ENCODE measurements at regions of chr2 and their contacts with region 1.

Region 1: DNA sequence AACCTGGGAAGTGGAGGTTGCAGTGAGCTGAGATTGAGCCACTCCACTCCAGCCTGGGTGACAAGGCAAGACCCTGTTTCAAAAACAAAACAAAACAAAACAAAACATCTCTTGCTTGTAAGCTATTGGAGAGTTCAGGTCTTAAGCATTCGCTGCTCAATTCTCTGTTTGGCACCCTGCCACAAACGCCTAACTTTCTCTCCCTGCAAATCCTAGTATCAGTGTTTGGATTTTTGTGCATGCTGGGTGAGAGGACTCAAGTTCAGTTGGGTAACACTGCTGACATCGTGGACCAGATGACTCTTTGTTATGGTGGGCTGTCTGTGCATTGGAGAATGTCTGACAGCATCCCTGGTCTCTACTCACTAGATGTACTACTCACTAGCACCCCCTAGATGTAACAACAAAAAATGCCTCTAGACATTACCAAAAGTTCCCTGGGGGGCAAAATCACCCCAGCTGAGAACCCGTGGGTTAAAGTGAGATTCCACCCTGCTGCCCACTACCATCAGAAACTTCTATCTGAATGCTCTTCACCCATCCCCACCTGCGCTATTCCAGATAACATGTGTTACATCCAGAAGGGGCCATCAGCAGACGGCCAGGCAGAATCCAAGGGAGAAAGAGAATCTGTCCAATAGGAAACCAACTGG is 50.9 kb downstream of the CACNB4 start:
- DNase-seq: no peak
- ATAC-seq: no peak

Region 2: DNA sequence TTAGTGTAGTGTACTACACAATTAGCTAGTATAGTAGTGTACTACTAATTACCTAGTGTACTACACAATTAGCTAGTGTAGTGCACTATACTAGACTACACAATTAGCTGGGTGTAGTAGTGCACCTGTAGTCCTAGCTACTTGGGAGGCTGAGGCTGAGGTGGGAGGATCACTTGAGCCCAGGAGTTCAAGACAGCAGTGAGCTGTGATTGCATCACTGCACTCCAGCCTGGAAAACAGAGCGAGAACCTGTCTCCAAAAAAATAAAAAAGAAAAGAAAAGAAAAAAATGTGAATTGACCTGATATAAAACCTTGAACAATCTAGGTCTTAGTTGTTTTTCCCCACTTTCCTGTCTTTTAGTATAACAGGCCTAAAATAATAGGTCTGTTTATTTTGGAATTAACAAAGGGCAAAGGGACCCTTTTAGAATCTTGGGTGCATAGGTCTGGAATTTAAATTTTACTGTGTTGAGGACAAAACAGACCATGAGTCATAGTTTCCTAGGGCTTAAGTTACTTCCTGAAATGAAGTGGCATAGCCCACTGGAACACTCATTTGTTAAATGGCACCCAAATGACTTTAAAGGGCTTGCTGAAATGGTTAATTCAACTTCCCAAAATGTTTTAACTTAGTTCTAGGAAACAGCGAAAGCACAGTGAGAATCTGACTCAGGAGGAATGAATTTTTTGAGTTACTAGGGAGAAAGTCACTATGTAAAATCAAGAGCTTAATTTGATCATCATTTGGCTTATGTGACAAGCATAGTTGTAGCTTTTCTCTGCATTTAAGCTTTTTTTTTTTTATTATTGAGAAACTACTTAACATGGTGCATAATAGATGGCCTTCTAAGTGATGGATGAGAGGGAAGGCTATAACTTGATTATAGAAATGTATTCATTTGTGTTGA is 169.0 kb before region 1 on chr2:
- intact Hi-C with region 1: no loop called
- DNase-seq: no peak
- ATAC-seq: peak; percentile 34 to 72

Region 3: DNA sequence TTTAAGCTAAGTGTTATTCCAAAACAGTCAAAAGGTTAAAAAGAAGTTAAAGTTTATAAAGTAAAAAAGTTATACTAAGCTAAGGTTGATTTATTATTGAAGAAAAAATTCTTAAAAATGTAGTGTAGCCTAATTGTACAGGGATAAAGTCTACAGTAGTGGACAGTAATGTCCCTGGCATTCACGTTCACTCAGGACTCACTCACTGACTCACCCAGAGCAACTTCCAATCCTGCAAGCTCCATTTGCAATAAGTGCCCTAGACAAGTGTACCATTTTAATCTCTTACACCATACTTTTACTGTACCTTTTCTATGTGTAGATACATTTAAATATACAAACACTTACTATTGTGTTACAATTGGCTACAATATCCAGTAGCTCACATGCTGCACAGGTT is 35.2 kb before region 1 on chr2:
- intact Hi-C with region 1: no loop called
- DNase-seq: no peak
- ATAC-seq: no peak

Region 4: GRCh38 chr2:152115952-152116351 is 68.0 kb after region 1 on chr2:
- intact Hi-C with region 1: loop called in 1 of 2 experiments (anchors 10 kb)
- DNase-seq: no peak
- ATAC-seq: no peak

Region 5: DNA sequence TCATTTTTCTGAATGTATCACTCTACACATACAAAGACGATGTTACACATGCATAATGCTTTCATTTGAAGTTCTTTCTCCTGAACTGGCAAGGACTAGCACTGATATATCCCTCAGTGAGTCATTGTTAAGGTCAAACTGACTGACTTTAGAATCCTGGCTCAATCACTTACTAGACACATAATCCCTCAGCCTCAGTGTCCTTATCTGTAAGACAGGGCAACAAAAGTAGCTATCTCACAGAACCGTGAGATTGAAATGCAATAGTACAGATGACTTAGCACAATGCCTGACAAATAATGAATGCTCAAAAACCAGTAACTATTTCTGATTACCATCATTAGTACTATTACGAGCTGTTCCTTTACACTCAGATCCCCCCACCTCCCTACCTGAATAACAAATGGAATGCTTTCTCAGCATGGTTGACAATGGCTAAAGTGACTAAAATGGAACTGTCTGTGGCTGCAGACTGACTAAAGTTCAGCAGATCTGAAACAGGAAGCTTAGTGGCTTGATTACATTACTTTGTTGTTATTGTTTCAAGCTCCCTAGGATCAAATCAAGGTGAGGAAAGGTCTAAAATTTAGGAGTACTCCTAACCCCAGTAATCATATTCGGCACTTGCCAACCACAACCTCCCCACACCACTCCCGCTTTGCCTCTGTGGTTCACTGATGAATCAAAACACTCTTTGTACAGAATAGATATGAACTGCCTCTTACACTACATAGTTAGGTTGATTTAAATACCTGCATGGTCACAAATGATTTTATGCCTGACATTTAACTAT is 86.7 kb after region 1 on chr2:
- intact Hi-C with region 1: no loop called
- DNase-seq: no peak
- ATAC-seq: peak; percentile 23 to 84

Measured in left cardiac atrium (tissue), 4 donors.